Mammary epithelial cell (primary cell): ENCODE measurements at regions of chr7 and their contacts with region 1.

Region 1: DNA sequence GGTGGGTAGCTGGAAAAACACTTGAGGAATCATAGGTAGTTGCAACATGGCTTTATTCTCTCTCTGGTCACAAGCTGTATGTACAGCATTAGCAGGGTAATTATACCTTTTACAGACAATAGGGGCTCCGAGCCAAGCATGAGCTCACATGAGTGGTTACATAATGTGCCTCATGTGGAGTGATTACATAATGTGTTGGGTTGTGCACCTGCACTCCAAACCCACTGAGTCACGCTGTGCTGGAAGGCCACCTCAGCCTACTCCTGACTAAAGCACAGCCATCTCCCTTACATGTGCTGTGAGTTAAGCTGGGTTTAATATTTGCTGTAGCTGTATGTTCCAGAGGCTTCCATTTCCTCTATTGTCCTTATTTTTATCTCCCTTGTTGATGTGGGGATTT is 348.7 kb upstream of the SEMA3C start:
- DNase-seq: peak; percentile 97
- H3K4me3 ChIP-seq: no peak overlapping the region
- H3K27ac ChIP-seq: peak overlapping the region; percentile 32
- H3K4me1 ChIP-seq: peaks cover 22% of the 10 kb centered on the region
- H3K27me3 ChIP-seq: no peaks in the 10 kb centered on the region
- CTCF ChIP-seq: no peak

Region 2: GRCh38 chr7:81221527-81222217 is 45.8 kb before region 1 on chr7:
- CTCF ChIA-PET with region 1: no interaction called
- dilution Hi-C with region 1: loop called (anchors 5 kb)
- in situ Hi-C with region 1: no loop called
- intact Hi-C with region 1: no loop called
- DNase-seq: peak; percentile 5
- H3K4me3 ChIP-seq: no peak overlapping the region
- H3K27ac ChIP-seq: no peak overlapping the region
- H3K4me1 ChIP-seq: no peaks in the 10 kb centered on the region
- H3K27me3 ChIP-seq: no peaks in the 10 kb centered on the region
- CTCF ChIP-seq: no peak

Region 3: GRCh38 chr7:81361769-81362312 is 94.3 kb after region 1 on chr7:
- CTCF ChIA-PET with region 1: no interaction called
- dilution Hi-C with region 1: no loop called
- in situ Hi-C with region 1: no loop called
- intact Hi-C with region 1: no loop called
- DNase-seq: peak; percentile 8
- H3K4me3 ChIP-seq: no peak overlapping the region
- H3K27ac ChIP-seq: no peak overlapping the region
- H3K4me1 ChIP-seq: peaks cover 4% of the 10 kb centered on the region
- H3K27me3 ChIP-seq: no peaks in the 10 kb centered on the region
- CTCF ChIP-seq: no peak